Activated CD4-positive, alpha-beta memory T cell treated with anti-CD3 and anti-CD28 coated beads for 36 hours (primary cell): ENCODE measurements at regions of chr5 and their contacts with region 1.

Region 1: GRCh38 chr5:88203981-88204750 is 64.5 kb downstream of the TMEM161B start:
- DNase-seq: peak; percentile 68
- H3K4me3 Mint-ChIP-seq: peak overlapping the region; percentile 9
- H3K27ac Mint-ChIP-seq: peak overlapping the region; percentile 76
- H3K4me1 Mint-ChIP-seq: peaks cover 15% of the 10 kb centered on the region
- H3K27me3 Mint-ChIP-seq: no peaks in the 10 kb centered on the region

Region 2: DNA sequence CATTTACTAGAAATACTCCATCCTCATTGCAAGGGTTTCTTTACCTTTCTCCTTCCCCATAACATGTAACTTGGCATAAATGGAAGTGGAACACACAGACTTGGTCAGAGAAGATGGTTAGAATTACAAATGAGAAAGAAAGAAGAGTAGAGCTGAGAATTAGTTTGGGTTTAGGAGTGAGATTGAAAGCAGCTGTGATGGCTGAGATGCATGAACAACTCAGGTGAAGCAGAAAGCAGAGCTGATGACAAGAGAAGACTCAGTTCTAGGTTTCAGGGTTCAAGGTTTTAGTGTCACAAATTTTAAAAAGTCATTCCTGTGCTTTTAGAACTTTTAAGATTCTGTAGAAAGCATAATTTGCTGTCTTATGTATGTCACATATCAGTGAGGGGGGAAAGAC is 10.5 kb after region 1 on chr5:
- CTCF ChIA-PET with region 1: no interaction called
- POLR2A ChIA-PET with region 1: no interaction called
- intact Hi-C with region 1: no loop called
- DNase-seq: no peak
- H3K4me3 Mint-ChIP-seq: no peak overlapping the region
- H3K27ac Mint-ChIP-seq: no peak overlapping the region
- H3K4me1 Mint-ChIP-seq: no peaks in the 10 kb centered on the region
- H3K27me3 Mint-ChIP-seq: no peaks in the 10 kb centered on the region

Region 3: GRCh38 chr5:88251048-88251711 is 47.0 kb after region 1 on chr5:
- CTCF ChIA-PET with region 1: no interaction called
- POLR2A ChIA-PET with region 1: no interaction called
- intact Hi-C with region 1: loop called (anchors 1 kb)
- DNase-seq: peak; percentile 43
- H3K4me3 Mint-ChIP-seq: no peak overlapping the region
- H3K27ac Mint-ChIP-seq: peak overlapping the region; percentile 73
- H3K4me1 Mint-ChIP-seq: peaks cover 62% of the 10 kb centered on the region
- H3K27me3 Mint-ChIP-seq: no peaks in the 10 kb centered on the region